ENCODE measurements at regions of chr1 and their contacts with region 1.

Region 1: GRCh38 chr1:160675641-160676410 is 29.0 kb upstream of the SLAMF1 start:
- DNase-seq: peak; percentile 88
- H3K4me3 Mint-ChIP-seq: no peak overlapping the region
- H3K27ac Mint-ChIP-seq: peak overlapping the region; percentile 76
- H3K4me1 Mint-ChIP-seq: peaks cover 49% of the 10 kb centered on the region
- H3K27me3 Mint-ChIP-seq: no peaks in the 10 kb centered on the region

Region 2: GRCh38 chr1:160519642-160520435 is 156.0 kb before region 1 on chr1:
- CTCF ChIA-PET with region 1: no interaction called
- POLR2A ChIA-PET with region 1: no interaction called
- intact Hi-C with region 1: loop called (anchors 5 kb)
- DNase-seq: peak; percentile 66
- H3K4me3 Mint-ChIP-seq: peak overlapping the region; percentile 92
- H3K27ac Mint-ChIP-seq: peak overlapping the region; percentile 92
- H3K4me1 Mint-ChIP-seq: peaks cover 83% of the 10 kb centered on the region
- H3K27me3 Mint-ChIP-seq: no peaks in the 10 kb centered on the region

Region 3: DNA sequence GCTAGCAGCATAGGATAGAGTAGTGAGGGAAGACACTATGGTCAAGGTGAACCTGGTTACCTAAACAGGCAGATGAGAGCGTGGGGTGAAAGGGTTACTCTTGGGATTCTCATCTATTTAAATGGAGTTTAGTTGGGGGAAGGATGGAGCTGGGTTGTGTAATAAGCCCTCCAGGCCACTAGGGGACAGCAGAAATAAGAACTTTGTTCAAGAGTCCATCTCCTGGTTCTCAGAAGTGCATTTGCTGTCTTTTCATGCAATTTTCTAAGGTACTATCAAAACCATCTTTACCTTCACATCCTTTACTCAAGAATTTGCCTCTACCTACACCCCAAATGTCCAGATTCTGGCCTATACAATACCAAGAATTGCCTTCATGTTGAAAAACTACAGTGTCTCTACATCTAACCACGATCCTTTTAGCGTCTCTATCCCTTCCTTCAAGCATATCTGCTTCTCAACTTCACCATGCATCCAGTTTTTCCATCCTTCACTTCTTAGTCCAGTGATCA is 57.0 kb before region 1 on chr1:
- CTCF ChIA-PET with region 1: interaction called, 69 read pairs
- POLR2A ChIA-PET with region 1: interaction called, 3 read pairs
- intact Hi-C with region 1: loop called (anchors 1 kb)
- DNase-seq: peak; percentile 59
- H3K4me3 Mint-ChIP-seq: no peak overlapping the region
- H3K27ac Mint-ChIP-seq: peak overlapping the region; percentile 68
- H3K4me1 Mint-ChIP-seq: peaks cover 63% of the 10 kb centered on the region
- H3K27me3 Mint-ChIP-seq: no peaks in the 10 kb centered on the region

Region 4: DNA sequence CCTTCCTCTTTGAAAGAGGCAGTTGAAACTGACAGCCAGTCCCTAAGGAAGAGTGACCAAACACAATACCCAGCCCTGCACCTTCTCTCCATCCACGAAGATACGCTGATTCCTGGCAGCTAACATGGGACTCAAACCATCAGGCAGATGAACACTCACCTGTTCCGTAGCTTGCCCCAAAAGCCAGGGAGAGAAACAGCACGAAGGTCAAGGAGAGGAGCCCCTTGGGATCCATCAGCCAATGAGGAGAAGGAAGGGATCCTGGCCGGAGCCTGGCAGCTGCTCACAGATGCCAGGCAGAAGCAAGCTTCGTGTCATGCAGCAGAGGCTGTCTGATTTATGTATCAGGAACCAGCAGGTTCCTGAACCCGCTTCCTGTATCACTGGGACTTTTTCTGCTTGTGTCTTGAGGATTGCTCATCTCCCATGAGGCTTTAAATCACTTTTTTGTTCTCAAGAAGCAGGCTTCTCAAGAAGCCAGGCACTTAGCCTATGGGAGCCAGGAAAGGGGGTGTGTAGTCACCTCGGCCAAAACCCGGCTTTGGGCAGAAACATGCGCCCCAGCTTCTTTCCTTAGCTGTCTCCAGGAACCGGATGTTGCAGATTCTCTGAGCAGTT is 29.0 kb before region 1 on chr1 and contains the start of gene SLAMF1:
- CTCF ChIA-PET with region 1: interaction called, 58 read pairs
- POLR2A ChIA-PET with region 1: interaction called, 81 read pairs
- intact Hi-C with region 1: loop called (anchors 1 kb)
- DNase-seq: peak; percentile 85
- H3K4me3 Mint-ChIP-seq: peak within 1 kb of the TSS; percentile 96
- H3K27ac Mint-ChIP-seq: peak within 1 kb of the TSS; percentile 98
- H3K4me1 Mint-ChIP-seq: peaks cover 47% of the 10 kb centered on the region
- H3K27me3 Mint-ChIP-seq: no peaks in the 10 kb centered on the region
- total RNA-seq, gene SLAMF1: 166 TPM

Region 5: DNA sequence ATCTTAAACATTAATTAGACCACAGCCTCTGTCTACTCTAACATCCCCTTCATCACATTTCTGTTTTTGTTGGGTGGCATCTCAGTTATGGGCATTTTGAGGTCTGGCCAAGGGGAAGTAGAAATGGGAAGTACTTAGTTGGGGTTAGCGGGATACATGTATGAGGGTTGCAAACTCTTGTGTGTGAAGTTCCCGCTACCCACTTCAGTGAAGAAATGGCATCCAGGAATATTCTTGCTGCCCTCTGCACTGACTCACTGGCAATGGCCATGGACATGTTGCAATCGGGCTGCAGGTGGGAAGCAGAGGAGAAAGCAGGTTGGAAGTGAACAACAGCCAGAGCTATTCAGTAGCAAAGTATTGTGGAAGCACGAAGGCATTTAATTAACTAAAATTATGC is 28.4 kb after region 1 on chr1:
- CTCF ChIA-PET with region 1: interaction called, 24 read pairs
- POLR2A ChIA-PET with region 1: interaction called, 10 read pairs
- intact Hi-C with region 1: loop called (anchors 5 kb)
- DNase-seq: no peak
- H3K4me3 Mint-ChIP-seq: peak overlapping the region; percentile 39
- H3K27ac Mint-ChIP-seq: peak overlapping the region; percentile 36
- H3K4me1 Mint-ChIP-seq: peaks cover 68% of the 10 kb centered on the region
- H3K27me3 Mint-ChIP-seq: no peaks in the 10 kb centered on the region

Region 6: GRCh38 chr1:160768295-160768657 is 92.5 kb after region 1 on chr1:
- CTCF ChIA-PET with region 1: interaction called, 154 read pairs
- POLR2A ChIA-PET with region 1: interaction called, 13 read pairs
- intact Hi-C with region 1: no loop called
- DNase-seq: peak; percentile 93
- H3K4me3 Mint-ChIP-seq: peak overlapping the region; percentile 78
- H3K27ac Mint-ChIP-seq: peak overlapping the region; percentile 96
- H3K4me1 Mint-ChIP-seq: peaks cover 28% of the 10 kb centered on the region
- H3K27me3 Mint-ChIP-seq: no peaks in the 10 kb centered on the region

Region 7: GRCh38 chr1:160795951-160796383 is 120.1 kb after region 1 on chr1 and contains the start of gene LY9:
- CTCF ChIA-PET with region 1: interaction called, 15 read pairs
- POLR2A ChIA-PET with region 1: interaction called, 5 read pairs
- intact Hi-C with region 1: no loop called
- DNase-seq: peak; percentile 90
- H3K4me3 Mint-ChIP-seq: peak within 1 kb of the TSS; percentile 77
- H3K27ac Mint-ChIP-seq: peak within 1 kb of the TSS; percentile 88
- H3K4me1 Mint-ChIP-seq: peaks cover 61% of the 10 kb centered on the region
- H3K27me3 Mint-ChIP-seq: no peaks in the 10 kb centered on the region
- total RNA-seq, gene LY9: 4.8 to 4.9 TPM